Uterus (tissue), 4 donors: ENCODE measurements at regions of chr2 and their contacts with region 1.

Region 1: DNA sequence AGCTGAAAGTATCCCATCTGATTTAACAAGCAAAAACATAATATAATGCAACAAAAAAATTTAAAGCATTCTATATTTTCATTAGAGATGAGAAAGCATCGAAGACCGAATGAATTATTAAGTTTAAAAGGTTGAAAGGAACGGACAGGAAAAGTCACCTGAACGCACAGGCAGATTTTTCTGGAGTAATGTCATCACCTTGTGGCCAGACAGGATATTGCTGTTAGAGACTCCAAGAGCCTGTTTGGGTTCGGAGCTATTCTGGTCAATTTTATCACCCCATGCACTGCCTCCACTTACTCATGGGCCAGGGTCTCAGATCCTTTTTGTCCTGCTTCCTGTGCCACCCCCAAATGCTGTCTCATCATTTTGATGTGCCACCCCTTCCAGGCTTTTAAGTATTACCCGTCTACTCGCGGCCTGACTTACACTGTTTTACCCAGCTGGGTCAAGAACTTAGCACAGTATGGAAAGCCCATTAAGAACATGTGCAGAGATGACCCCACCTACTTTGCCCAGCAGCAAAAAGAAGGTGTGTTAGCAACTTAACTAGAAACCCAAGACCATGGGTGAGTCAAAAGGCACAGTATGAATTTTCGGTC is 27.3 kb downstream of the GKN2 start:
- DNase-seq: no peak
- H3K4me3 ChIP-seq: no peak overlapping the region
- H3K27ac ChIP-seq: no peak overlapping the region
- H3K4me1 ChIP-seq: no peaks in the 10 kb centered on the region
- H3K27me3 ChIP-seq: no peaks in the 10 kb centered on the region
- CTCF ChIP-seq: peak; percentile 73 to 88 (median 84)
- POLR2A ChIP-seq: no peak

Region 2: DNA sequence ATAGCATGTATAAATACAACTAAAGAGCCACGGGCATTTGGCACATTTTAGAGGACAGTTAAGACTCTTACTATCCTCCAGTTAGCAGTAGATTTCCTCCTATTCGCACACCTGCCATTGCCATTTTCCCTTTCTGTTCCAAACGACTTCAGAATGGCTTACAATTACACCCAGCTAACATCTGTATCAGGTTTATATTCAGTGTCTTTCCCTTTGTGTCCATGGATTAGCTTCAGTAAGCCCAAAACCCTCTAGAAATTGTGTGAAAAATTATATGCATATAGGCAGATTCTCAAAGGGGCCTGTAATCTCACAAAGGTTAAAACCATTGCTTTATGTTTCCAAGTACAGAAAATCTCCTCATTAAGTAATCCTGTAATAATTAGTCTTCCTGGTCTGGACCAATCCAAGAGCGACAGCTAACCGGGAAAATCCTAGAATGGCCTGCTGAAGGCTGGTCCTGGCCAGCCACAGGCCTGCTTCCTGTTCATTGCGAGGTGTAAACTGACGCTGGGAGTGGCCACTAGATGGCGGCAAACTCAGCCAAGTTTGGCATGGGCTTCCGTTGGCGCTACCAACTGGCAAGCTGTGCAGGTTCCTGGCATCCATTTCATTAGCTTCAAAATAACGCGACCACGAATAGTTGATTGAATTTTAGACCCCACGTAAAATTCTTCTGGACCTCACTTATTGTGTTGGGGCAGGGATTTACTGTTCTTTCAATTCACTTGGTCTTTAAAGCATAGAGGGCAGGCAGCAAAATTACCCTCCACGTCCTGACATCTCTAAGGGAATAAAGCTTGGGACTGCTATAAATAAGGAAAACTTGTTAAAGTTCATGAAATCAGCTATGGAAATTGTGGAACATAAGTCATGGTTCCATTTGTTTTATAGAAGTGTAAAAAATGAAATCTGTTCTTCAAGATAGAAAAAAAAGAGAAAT is 173.7 kb before region 1 on chr2:
- intact Hi-C with region 1: loop called (anchors 5 kb)
- DNase-seq: peak; percentile 86 to 89
- H3K4me3 ChIP-seq: peak overlapping the region in 1 of 2 donors; percentile 15
- H3K27ac ChIP-seq: peak overlapping the region in 1 of 2 donors; percentile 9
- H3K4me1 ChIP-seq: no peaks in the 10 kb centered on the region
- H3K27me3 ChIP-seq: no peaks in the 10 kb centered on the region
- CTCF ChIP-seq: peak; percentile 89 to 93 (median 89)
- POLR2A ChIP-seq: no peak

Region 3: DNA sequence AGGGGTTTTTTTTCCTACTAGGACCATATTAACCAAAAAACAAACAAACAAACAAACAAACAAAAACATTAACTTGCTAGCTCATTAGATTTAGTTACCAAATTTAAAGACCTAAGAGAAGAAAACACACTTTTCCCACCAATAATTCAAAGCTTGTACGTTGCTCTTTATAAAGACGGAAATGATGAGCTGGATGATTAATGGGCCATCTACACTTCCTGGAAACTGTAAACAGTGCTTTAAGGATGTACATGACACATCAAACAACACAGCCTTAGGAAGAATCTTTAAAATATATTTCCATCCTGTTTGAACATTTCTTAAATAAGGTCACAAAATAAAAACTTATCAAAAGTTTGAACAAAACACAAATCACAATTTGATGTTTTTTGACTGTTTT is 55.2 kb before region 1 on chr2:
- intact Hi-C with region 1: no loop called
- DNase-seq: no peak
- H3K4me3 ChIP-seq: no peak overlapping the region
- H3K27ac ChIP-seq: no peak overlapping the region
- H3K4me1 ChIP-seq: no peaks in the 10 kb centered on the region
- H3K27me3 ChIP-seq: no peaks in the 10 kb centered on the region
- CTCF ChIP-seq: no peak
- POLR2A ChIP-seq: no peak

Region 4: DNA sequence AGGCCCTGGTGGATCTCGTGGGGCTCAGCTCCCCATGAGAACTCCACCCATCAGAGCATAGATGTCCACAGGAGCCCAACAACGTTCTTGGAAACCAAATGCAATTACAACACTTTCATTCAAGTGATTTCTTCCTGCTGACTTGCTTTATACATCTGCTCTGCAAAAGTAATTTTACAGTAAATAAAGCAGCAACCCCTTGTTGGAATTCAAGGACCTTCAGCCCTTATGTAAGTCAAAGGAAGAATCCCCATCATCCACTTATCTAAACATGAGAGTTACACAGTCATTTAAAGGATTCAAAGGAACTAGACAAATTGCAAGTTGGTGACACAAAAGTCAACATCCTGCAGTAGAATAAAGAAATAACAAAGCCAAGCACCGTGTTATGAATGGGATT is 70.5 kb after region 1 on chr2:
- intact Hi-C with region 1: no loop called
- DNase-seq: no peak
- H3K4me3 ChIP-seq: no peak overlapping the region
- H3K27ac ChIP-seq: no peak overlapping the region
- H3K4me1 ChIP-seq: no peaks in the 10 kb centered on the region
- H3K27me3 ChIP-seq: no peaks in the 10 kb centered on the region
- CTCF ChIP-seq: no peak
- POLR2A ChIP-seq: no peak

Region 5: DNA sequence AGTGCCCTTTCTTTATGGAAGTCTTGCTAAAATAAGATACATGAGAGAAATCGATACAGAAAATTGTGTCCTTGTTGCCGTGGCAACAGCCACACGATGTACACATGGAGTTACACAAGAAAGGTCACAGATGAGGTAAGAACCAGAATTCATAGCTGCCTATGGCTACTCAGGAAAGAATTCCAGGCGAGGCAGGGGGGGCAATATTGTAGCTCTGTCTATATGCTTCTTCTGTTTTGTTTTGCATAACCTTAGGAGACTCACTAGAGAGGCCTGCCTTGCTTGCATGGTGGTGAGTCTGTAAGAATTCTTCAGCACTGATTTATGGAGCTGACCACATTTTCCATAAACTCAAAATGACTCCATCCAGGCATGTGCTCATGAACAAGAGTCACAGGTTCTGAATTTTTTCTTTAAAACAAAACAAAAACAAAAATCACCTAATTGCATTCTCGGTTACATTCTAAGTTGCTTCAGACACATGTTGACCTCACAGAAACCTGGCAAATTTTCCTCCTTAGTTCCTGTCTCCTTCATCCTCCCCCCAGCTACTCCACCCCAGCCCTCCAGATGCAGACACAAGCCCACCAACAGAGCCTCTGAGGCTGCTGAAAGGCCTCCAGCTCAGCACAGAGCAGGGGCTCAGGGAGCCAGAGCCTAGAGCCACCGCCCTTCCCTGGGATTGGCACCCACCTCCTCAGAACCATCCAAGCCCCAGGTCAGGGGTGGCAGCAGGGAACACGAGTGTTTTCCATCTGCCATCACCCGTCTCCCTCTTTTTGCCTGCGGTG is 271.1 kb after region 1 on chr2:
- intact Hi-C with region 1: no loop called
- DNase-seq: peak in 1 of 2 donors; percentile 62
- H3K4me3 ChIP-seq: no peak overlapping the region
- H3K27ac ChIP-seq: peak overlapping the region; percentile 85 to 86
- H3K4me1 ChIP-seq: peaks cover 12% of the 10 kb centered on the region in 2 donors
- H3K27me3 ChIP-seq: no peaks in the 10 kb centered on the region
- CTCF ChIP-seq: no peak
- POLR2A ChIP-seq: no peak

Region 6: GRCh38 chr2:69242651-69243051 is 317.3 kb after region 1 on chr2:
- intact Hi-C with region 1: no loop called
- DNase-seq: peak in 1 of 2 donors; percentile 31
- H3K4me3 ChIP-seq: no peak overlapping the region
- H3K27ac ChIP-seq: peak overlapping the region; percentile 33 to 67
- H3K4me1 ChIP-seq: no peaks in the 10 kb centered on the region
- H3K27me3 ChIP-seq: no peaks in the 10 kb centered on the region
- CTCF ChIP-seq: no peak
- POLR2A ChIP-seq: no peak